HEK293 (cell line): ENCODE measurements at regions of chr17 and their contacts with region 1.

Region 1: GRCh38 chr17:71402661-71403141 is 718.1 kb upstream of the SOX9 start:
- H3K4me3 ChIP-seq: no peak overlapping the region
- H3K27ac ChIP-seq: peak overlapping the region; percentile 44; the same call in 1 of the 2 replicates
- H3K4me1 ChIP-seq: peaks cover 13% of the 10 kb centered on the region; the same call in 1 of the 2 replicates
- CTCF ChIP-seq: no peak

Region 2: DNA sequence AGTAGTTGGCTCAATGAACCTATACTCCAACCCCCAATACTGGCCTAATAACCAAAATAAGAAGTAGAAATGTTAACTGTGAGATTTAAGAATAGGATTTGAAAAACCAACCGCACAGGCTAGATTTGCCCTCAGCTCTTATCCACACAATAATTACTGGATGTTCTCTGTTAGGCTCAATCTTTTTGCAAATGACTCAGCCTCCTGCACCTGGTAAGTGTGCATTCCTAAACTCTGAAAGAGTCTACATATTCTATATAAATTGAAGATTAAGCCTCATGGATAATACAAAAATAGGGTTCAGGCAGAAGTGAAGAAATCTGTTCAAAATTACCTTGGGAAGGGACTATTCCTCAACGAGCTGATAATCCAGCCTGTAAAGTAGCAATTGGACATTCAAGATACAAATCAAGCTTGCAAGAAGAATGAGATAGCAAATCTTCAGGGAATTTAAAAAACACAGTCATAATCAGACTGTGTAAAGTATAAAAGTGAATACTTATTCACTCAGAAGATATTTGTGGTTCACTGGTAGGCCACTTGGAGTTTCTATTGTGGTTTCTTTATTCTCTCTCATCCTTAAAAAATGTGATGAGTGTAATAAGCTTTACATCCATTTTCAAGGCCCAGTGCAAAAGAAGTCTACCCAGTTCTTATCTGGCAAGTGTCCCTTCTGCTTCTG is 213.7 kb before region 1 on chr17:
- CTCF ChIA-PET with region 1: interaction called, 10 read pairs
- POLR2A ChIA-PET with region 1: no interaction called
- H3K4me3 ChIP-seq: no peak overlapping the region
- H3K27ac ChIP-seq: no peak overlapping the region
- H3K4me1 ChIP-seq: peaks cover 11% of the 10 kb centered on the region; the same call in 1 of the 2 replicates
- CTCF ChIP-seq: no peak

Region 3: DNA sequence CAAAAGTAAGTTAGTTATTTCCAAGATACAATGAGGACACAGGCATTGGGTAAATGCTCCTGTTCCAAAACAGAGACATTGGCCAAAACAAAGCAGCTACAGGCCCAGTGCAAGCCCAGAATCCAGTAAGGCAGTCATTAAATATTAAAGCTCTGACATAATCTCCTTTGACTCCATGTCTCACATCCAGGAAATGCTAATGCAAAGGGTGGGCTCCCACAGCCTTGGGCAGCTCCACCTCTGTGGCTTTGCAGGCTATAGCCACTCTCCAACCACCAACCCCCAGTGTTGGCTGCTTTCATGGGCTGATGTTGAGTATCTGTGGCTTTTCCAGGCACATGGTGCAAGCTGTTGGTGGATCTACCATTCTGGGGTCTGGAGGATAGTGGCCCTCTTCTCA is 15.2 kb before region 1 on chr17:
- CTCF ChIA-PET with region 1: no interaction called
- POLR2A ChIA-PET with region 1: no interaction called
- H3K4me3 ChIP-seq: no peak overlapping the region
- H3K27ac ChIP-seq: no peak overlapping the region
- H3K4me1 ChIP-seq: peaks cover 2% of the 10 kb centered on the region; the same call in 1 of the 2 replicates
- CTCF ChIP-seq: no peak